ENCODE measurements at regions of chr1 and their contacts with region 1.

Region 1: DNA sequence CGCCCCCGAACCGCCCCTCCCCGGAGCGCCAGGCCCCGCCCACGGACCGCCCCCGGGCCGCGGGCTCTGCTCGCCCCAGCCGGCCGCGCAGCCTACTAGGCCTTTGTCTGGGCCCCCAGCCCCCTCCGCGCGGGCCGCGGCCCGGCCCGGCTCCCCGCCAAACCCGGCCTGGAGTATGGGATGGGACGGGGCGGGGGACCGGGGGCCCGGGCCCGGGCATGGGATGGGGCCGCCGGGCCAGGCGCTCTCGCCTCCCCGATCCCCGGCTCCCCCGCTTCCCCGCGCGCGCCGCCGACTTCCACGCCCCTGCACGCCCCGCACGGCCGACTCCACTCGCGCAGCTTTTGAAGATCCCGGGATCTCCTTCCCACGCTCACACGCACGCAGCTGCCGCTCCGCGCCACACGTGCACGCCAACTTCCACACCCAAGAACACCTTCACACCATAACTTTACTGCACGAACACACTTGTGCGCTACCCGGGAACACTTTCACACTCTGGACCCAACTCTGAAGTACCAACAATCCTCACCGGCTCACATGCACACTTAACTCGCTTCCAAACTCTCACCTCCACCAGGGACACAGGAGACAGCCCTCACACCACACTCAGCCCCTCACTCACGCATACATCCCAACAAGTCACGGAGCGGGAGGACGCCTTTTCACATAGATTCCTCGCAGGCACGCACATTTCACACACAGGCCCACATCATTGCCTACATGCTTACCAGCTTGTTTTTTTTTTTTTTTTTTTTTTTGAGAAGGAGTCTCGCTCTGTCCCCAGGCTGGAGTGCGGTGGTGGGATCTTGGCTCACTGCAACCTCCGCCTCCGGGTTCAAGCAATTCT is 487 bp upstream of the HSPG2 start:
- DNase-seq: no peak
- H3K4me3 ChIP-seq: peak overlapping the region; percentile 45 to 89
- H3K27ac ChIP-seq: peak overlapping the region; percentile 69
- H3K4me1 ChIP-seq: peaks cover 75% of the 10 kb centered on the region
- H3K27me3 ChIP-seq: no peaks in the 10 kb centered on the region
- CTCF ChIP-seq: no peak
- POLR2A ChIP-seq: peak in 1 of 2 donors; percentile 37

Region 2: GRCh38 chr1:20017741-20018140 is 1919.9 kb before region 1 on chr1:
- intact Hi-C with region 1: no loop called
- DNase-seq: no peak
- H3K4me3 ChIP-seq: no peak overlapping the region
- H3K27ac ChIP-seq: no peak overlapping the region
- H3K4me1 ChIP-seq: no peaks in the 10 kb centered on the region
- H3K27me3 ChIP-seq: no peaks in the 10 kb centered on the region
- CTCF ChIP-seq: no peak
- POLR2A ChIP-seq: no peak

Region 3: DNA sequence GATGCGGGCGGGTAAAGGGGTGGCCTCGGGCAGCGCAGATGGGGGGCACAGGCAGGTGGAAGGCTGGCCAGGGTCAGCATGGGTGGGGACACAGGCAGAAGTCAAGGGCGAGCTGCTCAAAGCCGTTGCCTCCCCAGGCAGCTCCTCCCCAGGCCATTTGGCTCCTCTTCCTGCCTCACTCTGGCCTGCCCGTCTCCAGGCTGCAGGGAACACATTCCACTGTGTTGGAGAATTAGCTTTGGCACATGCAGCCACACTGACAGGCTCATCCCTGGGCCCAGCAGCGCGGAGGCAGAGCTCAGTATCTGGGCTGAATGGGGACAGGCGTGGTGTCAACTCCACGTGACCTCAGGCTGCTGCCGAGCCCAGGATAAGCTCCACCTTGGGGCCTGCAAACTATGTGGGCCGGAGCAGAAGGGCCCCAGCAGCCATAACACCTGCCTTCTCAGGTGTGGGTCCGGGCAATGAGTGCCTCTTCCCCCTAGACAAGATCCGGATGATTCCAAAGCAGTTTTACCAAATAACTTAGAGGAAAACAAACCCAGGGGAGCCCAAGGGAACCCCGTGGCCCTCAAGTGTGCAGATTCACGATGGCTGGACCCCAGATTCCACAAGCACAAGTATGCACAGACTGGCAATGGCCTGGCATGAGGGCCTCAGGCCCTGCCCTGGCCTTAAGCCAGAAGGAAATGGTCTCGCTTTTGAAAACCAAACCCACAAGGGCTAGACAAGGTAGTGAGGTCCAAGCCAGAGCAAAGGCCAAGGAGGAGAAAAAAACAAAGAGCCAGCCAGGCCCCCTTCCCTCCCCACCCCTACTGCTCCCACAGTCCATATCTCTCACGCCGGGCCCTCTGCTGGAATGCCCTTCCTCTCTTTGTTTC is 40.7 kb before region 1 on chr1:
- intact Hi-C with region 1: loop called (anchors 5 kb)
- DNase-seq: no peak
- H3K4me3 ChIP-seq: no peak overlapping the region
- H3K27ac ChIP-seq: peak overlapping the region; percentile 76
- H3K4me1 ChIP-seq: peaks cover 77% of the 10 kb centered on the region
- H3K27me3 ChIP-seq: no peaks in the 10 kb centered on the region
- CTCF ChIP-seq: no peak
- POLR2A ChIP-seq: no peak